ENCODE measurements at regions of chr5 and their contacts with region 1.

Region 1: DNA sequence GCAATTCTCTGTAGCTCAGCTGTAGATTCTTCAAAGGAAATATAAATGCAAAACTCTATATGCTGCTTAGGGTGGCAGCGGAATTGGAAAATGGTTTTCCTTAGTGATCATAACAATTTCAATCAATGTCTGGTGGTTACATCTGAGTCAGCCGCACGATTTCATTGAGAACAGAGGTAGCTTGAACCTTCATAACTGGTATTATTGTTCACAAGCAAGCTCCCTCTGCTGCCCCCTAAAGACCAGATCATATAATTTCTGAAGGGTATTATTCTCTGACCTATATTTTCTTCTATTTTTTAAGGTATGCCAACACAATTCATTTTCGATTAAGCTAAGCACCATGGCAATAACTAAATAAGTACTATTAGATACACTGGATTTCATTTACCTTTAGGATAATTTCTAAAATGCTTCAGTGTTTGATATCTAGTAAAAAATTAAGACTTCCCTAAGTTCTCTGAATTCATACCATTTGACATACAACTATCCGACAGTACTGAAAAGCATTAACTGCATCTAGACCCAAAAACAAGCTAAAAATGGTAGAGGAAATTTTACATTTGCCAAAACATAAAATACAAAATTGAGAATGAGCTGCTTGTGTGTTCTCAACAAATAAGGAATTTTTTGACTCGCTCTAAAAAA is 181.1 kb upstream of the SPEF2 start:
- DNase-seq: peak; percentile 26 to 54 (median 51)
- H3K4me3 ChIP-seq: no peak overlapping the region
- H3K4me3 Mint-ChIP-seq: no peak overlapping the region
- H3K27ac ChIP-seq: no peak overlapping the region
- H3K27ac Mint-ChIP-seq: no peak overlapping the region
- H3K4me1 ChIP-seq: peaks cover 12 to 32% of the 10 kb centered on the region in 2 donors
- H3K4me1 Mint-ChIP-seq: peaks cover 33% of the 10 kb centered on the region
- H3K27me3 ChIP-seq: no peaks in the 10 kb centered on the region
- H3K27me3 Mint-ChIP-seq: no peaks in the 10 kb centered on the region
- CTCF ChIP-seq: peak; percentile 77

Region 2: GRCh38 chr5:35383041-35383440 is 53.5 kb before region 1 on chr5:
- intact Hi-C with region 1: loop called in 1 of 2 experiments (anchors 10 kb)
- DNase-seq: peak; percentile 22 to 48 (median 28)
- H3K4me3 ChIP-seq: peak overlapping the region in 1 of 3 experiments; percentile 41
- H3K4me3 Mint-ChIP-seq: no peak overlapping the region
- H3K27ac ChIP-seq: peak overlapping the region; percentile 51 to 84
- H3K27ac Mint-ChIP-seq: peak overlapping the region; percentile 36 to 92 (median 86)
- H3K4me1 ChIP-seq: peaks cover 9 to 20% of the 10 kb centered on the region in 2 donors
- H3K4me1 Mint-ChIP-seq: peaks cover 28% of the 10 kb centered on the region
- H3K27me3 ChIP-seq: no peaks in the 10 kb centered on the region
- H3K27me3 Mint-ChIP-seq: peaks cover 0 to 1% (median 0%) of the 10 kb centered on the region in 3 donors
- CTCF ChIP-seq: no peak

Region 3: DNA sequence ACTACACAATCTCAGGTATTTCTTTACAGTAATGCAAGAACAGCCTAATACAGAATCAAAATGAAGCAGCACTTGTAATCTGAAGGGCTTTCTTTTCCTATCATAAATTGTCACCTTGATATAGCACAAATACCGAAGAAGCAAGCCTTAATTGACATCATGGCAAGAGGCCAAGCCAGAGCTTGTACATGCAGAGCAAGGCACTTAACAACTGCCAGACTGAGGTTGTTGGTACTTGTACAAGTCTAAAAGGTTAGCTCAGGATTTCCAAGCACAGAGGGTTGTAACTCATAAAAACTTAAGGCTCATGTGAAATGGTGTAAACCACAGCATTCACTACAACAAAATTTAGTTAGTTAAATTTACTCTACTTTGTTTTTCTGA is 22.3 kb after region 1 on chr5:
- intact Hi-C with region 1: no loop called
- DNase-seq: no peak
- H3K4me3 ChIP-seq: no peak overlapping the region
- H3K4me3 Mint-ChIP-seq: no peak overlapping the region
- H3K27ac ChIP-seq: no peak overlapping the region
- H3K27ac Mint-ChIP-seq: no peak overlapping the region
- H3K4me1 ChIP-seq: no peaks in the 10 kb centered on the region
- H3K4me1 Mint-ChIP-seq: peaks cover 2% of the 10 kb centered on the region
- H3K27me3 ChIP-seq: no peaks in the 10 kb centered on the region
- H3K27me3 Mint-ChIP-seq: peaks cover 0 to 2% (median 0%) of the 10 kb centered on the region in 3 donors
- CTCF ChIP-seq: no peak

Region 4: DNA sequence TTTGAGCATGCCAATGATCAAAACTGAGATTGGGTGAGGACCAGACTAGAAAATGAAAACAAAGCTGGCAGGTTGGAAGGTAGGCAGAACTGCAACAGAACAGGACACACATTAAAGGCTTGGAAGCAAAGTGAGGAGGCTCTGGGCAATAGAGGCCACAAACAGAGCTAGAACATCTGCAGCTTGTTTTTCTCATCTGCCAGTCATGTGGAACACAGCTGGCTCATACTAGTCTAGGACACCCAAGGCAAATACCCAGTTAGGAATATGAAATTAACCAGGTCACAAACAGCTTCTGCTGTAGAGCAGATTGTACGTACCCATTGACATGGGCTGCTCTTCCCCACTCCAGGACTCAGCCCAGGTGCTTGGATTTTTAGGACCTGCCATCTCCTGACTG is 242.8 kb after region 1 on chr5:
- intact Hi-C with region 1: no loop called
- DNase-seq: no peak
- H3K4me3 ChIP-seq: no peak overlapping the region
- H3K4me3 Mint-ChIP-seq: no peak overlapping the region
- H3K27ac ChIP-seq: no peak overlapping the region
- H3K27ac Mint-ChIP-seq: no peak overlapping the region
- H3K4me1 ChIP-seq: no peaks in the 10 kb centered on the region
- H3K4me1 Mint-ChIP-seq: no peaks in the 10 kb centered on the region
- H3K27me3 ChIP-seq: no peaks in the 10 kb centered on the region
- H3K27me3 Mint-ChIP-seq: no peaks in the 10 kb centered on the region
- CTCF ChIP-seq: no peak